ENCODE measurements at regions of chr20 and their contacts with region 1.

Region 1: GRCh38 chr20:31560094-31560899 is 44.8 kb upstream of the ID1 start:
- DNase-seq: peak in 3 of 4 donors; percentile 55 to 91 (median 81)
- ATAC-seq: peak; percentile 69
- H3K4me3 ChIP-seq: no peak overlapping the region
- H3K27ac ChIP-seq: peak overlapping the region; percentile 63 to 84
- H3K4me1 ChIP-seq: peaks cover 8 to 39% of the 10 kb centered on the region in 2 donors
- H3K27me3 ChIP-seq: no peaks in the 10 kb centered on the region
- CTCF ChIP-seq: peak; percentile 69 to 91

Region 2: DNA sequence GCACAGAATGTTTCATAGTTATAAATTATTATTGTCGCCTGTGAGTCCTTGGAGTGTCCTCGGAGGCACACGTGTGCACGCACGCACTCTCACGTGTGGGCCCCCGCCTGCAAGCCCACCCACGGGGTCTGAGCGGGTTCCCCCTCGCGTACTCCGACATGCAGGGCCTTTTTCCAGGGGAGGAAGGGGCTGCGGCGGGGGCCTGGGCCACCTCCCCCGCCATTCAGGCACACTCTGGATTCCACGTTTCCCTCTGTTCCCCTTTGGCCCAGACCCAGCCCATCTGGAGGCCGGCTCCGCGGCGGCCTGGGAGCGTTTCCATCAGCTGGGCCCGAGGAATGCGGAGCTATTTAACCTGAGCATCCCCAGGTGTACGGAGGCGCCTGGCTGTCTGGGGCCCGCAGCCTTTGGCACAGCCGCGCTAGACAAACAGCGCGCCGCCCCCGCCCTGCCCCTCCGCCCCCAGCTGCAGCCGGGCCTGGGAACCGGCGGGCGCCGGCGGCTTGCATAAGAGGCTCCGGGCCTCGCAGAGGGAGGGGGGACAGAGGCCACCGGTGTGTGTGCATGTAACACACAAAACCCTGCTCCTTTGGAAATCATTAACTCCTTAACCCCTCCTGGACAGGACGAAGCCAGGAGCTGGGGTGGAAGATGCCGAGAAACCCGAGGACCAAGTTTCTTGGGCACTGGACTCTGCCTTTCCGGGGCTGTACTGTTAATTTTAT is 48.1 kb after region 1 on chr20:
- intact Hi-C with region 1: loop called (anchors 2 to 10 kb)
- DNase-seq: peak in 3 of 4 donors; percentile 83 to 95 (median 88)
- ATAC-seq: peak; percentile 36
- H3K4me3 ChIP-seq: peak overlapping the region in 1 of 2 donors; percentile 69
- H3K27ac ChIP-seq: peak overlapping the region; percentile 90 to 95
- H3K4me1 ChIP-seq: peaks cover 22 to 86% of the 10 kb centered on the region in 2 donors
- H3K27me3 ChIP-seq: peaks cover 0 to 10% of the 10 kb centered on the region in 2 donors
- CTCF ChIP-seq: no peak

Region 3: GRCh38 chr20:31617432-31618104 is 57.3 kb after region 1 on chr20:
- intact Hi-C with region 1: loop called (anchors 2 to 10 kb)
- DNase-seq: no peak
- ATAC-seq: no peak
- H3K4me3 ChIP-seq: no peak overlapping the region
- H3K27ac ChIP-seq: peak overlapping the region in 1 of 2 donors; percentile 65
- H3K4me1 ChIP-seq: peaks cover 6 to 23% of the 10 kb centered on the region in 2 donors
- H3K27me3 ChIP-seq: no peaks in the 10 kb centered on the region
- CTCF ChIP-seq: no peak

Measured in left lung (tissue), 14 donors.